AG04450 (cell line): ENCODE measurements at regions of chr1 and their contacts with region 1.

Region 1: DNA sequence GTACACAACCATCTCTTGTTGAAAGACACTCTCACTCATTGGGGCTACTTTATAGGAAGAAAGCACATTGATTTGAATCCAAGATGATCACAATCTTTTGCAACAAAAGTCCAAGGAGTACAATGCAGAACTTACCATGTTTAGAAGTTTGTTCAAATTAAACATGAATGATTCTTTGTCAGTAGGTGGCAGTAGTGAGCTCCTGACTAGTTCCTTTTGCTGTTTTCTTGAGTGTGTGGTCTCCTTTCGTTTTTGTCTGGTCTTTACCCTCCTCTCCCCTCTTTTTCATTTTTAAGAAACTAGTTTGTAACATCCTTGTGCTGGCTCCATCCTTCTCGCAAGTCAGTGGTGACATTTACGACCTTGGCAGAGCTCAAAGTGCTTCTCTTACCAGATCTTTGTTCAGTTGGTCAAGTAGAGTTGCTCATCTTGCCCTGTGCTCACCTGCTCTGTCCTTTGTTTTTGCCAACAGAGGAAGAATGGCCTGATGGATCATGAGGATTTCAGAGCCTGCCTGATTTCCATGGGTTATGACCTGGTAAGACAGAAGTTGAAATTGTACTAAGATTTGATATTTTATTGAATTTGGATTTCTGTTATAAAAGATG is 35.7 kb upstream of the MTR start:
- DNase-seq: peak; percentile 8
- H3K4me3 ChIP-seq: no peak overlapping the region
- H3K27ac ChIP-seq: no peak overlapping the region
- H3K27me3 ChIP-seq: no peaks in the 10 kb centered on the region
- CTCF ChIP-seq: peak; percentile 77

Region 2: DNA sequence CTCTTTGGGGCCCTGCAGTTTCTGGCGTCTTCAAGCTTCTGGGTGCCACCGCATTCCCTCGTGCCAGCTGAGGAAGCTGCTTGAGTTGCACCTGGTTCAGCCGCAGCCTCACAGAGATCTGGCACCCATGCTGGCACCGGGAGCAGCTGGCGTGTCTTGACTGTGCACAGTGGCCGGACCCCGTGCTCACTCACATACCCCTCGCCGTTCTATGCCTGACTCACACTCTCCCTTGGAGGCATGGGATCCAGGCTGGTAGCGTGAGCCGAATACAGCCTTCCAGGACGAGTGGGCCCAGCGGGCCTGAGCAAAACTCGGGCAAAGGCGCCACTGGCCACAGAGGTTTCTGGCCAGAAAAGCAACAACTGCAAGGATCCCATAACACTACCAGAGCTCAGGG is 27.1 kb after region 1 on chr1:
- CTCF ChIA-PET with region 1: interaction called, 14 read pairs
- POLR2A ChIA-PET with region 1: no interaction called
- DNase-seq: no peak
- H3K4me3 ChIP-seq: no peak overlapping the region
- H3K27ac ChIP-seq: no peak overlapping the region
- H3K27me3 ChIP-seq: no peaks in the 10 kb centered on the region
- CTCF ChIP-seq: no peak

Region 3: DNA sequence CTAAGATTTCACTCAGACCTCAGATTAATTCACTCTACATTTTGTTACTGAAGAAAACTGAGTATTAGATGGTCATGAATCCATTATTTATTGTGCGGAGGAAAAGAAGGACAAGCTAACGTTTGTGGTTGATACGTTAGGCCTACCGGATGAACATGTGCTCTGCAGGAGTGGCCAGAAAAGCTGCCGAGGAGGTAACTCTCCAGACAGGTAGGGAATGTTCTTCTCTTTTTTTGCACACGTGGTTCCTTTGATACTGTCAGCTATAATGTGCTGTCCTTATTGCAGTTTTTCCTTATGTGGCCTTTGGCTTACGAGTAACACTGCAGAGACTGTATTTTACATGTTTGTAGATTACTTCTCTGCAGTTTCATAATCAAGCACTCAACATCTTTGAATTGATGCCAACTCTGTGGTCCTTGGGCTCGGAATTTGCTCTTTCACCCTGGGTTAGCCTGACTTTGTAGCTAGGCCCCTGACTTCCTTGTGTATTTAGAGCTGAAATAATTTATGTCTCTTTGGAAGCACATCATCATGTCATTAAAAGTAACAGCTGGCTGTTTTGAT is 49.3 kb after region 1 on chr1:
- CTCF ChIA-PET with region 1: interaction called, 11 read pairs
- POLR2A ChIA-PET with region 1: no interaction called
- DNase-seq: no peak
- H3K4me3 ChIP-seq: no peak overlapping the region
- H3K27ac ChIP-seq: no peak overlapping the region
- H3K27me3 ChIP-seq: no peaks in the 10 kb centered on the region
- CTCF ChIP-seq: no peak

Region 4: DNA sequence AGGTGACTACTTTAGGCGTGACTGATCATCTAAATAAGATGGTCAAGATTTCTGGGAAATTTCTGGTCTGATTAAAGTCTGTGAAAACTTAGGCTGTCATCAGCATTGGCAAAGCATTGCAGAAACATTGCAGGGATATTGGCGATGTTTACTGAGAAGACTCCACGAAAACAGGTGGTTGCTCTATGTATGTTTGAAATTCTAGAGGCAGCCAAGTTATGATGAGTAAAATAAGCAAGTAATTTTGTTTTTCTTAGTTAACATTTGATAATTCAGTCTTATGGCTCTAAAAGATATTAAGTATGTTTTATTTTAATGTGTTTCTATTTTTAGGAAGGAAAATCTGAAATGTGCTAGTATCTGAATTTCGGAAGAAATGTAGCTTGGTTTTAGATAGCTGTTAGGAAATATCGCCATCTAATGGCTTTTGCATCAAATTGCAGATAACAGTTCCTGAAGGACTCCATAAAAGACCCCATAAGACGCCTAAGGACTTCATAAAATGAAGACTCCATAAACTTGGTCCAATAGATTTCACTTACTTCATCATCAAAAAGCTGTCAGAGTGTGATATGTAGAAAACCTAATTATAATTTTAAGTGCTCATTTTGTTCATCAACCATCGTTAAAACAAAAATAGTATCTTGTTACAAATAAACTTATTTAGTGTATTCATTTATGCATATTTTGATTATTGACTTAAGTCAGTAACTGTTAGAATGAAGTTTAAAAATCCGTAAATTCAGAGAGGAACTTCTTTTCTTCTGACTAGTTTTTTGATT is 627.2 kb after region 1 on chr1:
- CTCF ChIA-PET with region 1: interaction called, 39 read pairs
- POLR2A ChIA-PET with region 1: no interaction called
- DNase-seq: no peak
- H3K4me3 ChIP-seq: no peak overlapping the region
- H3K27ac ChIP-seq: no peak overlapping the region
- H3K27me3 ChIP-seq: no peaks in the 10 kb centered on the region
- CTCF ChIP-seq: peak; percentile 75